Activated CD4-positive, alpha-beta T cell treated with anti-CD3 and anti-CD28 coated beads for 36 hours (primary cell): ENCODE measurements at regions of chr1 and their contacts with region 1.

Region 1: DNA sequence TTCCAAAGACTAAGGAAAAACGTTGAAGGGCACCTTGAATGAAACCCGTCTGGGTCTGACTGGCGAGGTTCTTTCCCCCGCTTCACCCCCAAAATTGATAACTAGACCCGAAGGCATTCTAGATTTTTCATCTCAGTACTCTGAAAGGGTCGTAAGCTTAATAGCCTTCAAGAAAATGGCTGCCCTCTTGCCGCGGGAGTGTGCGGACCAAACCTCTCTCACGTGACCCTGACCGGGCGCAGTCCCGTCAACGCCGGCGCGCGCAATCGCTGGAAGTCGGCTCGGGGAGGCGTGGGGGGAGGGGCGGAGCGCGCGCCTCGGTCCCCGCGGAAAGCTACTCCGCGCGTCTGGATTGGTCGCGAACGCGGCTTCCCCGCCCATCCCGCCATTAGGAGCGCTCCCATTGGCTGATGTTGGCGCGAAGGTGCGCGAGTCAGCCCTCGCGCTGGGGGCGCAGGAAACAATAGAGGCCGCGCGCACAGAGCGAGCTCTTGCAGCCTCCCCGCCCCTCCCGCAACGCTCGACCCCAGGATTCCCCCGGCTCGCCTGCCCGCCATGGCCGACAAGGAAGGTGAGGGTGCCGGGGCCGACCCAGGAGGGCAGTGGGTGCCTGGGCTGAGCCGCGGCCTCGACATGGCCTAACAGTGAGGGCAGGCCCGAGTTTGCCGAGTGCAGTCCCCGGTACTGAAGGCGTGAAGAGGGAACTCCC is at the start of gene RBBP4:
- DNase-seq: peak; percentile 99
- ATAC-seq: peak; percentile 89
- H3K4me3 Mint-ChIP-seq: peak within 1 kb of the TSS; percentile 90
- H3K27ac Mint-ChIP-seq: peak within 1 kb of the TSS; percentile 99
- H3K4me1 Mint-ChIP-seq: peaks cover 48% of the 10 kb centered on the region
- H3K27me3 Mint-ChIP-seq: no peaks in the 10 kb centered on the region
- total RNA-seq, gene RBBP4: 323 to 331 TPM

Region 2: DNA sequence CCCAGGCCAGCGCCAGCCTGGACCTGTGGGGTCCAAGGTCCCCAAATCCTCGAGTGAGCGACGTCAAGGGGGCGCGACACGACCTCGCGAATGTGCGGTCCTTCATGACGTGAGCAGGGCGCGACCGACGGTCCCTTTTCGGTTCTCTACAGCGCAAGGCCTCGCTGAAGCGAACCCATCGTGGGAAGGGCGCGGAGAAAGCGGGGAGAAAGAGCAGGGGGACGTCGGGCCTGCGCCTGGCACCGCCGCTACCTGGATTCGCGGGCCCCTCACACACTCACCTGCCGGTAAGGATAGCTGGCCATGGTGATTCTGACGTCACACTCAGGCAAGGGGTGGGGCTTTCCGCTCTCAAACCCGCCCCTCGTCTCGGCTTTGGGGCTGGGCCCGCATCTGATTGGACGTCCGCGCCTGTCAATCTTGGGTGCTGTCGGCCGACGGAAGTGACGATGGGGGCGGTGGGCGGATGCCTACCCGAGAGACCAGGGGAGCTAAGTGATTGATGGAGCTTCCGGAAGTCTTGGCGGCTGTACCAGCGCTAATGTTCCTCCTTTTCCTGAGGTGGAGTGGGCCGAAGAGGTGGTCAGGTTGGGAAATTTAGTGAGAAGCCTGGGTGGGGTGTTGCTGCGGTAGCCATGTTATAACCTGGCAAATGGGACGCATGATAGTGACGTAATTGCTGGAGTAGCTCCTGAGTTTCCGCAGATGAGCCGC is 1006.2 kb before region 1 on chr1 and contains the start of gene PEF1:
- CTCF ChIA-PET with region 1: no interaction called
- POLR2A ChIA-PET with region 1: no interaction called
- intact Hi-C with region 1: loop called in 1 of 2 experiments (anchors 1 kb)
- DNase-seq: peak; percentile 100
- ATAC-seq: peak; percentile 91
- H3K4me3 Mint-ChIP-seq: peak within 1 kb of the TSS; percentile 95
- H3K27ac Mint-ChIP-seq: peak within 1 kb of the TSS; percentile 100
- H3K4me1 Mint-ChIP-seq: peaks cover 23% of the 10 kb centered on the region
- H3K27me3 Mint-ChIP-seq: no peaks in the 10 kb centered on the region
- total RNA-seq, gene PEF1: 48.8 to 59.3 TPM

Region 3: GRCh38 chr1:32221980-32222755 is 428.7 kb before region 1 on chr1 and contains the starts of genes EIF3I and TMEM234:
- CTCF ChIA-PET with region 1: no interaction called
- POLR2A ChIA-PET with region 1: no interaction called
- intact Hi-C with region 1: loop called in 1 of 2 experiments (anchors 1 kb)
- DNase-seq: peak; percentile 95
- ATAC-seq: peak; percentile 95
- H3K4me3 Mint-ChIP-seq: peak within 1 kb of the TSS; percentile 96
- H3K27ac Mint-ChIP-seq: peak within 1 kb of the TSS; percentile 97
- H3K4me1 Mint-ChIP-seq: peaks cover 29% of the 10 kb centered on the region
- H3K27me3 Mint-ChIP-seq: no peaks in the 10 kb centered on the region
- total RNA-seq, gene EIF3I: 299 to 349 TPM
- total RNA-seq, gene TMEM234: 7.3 to 8.2 TPM

Region 4: DNA sequence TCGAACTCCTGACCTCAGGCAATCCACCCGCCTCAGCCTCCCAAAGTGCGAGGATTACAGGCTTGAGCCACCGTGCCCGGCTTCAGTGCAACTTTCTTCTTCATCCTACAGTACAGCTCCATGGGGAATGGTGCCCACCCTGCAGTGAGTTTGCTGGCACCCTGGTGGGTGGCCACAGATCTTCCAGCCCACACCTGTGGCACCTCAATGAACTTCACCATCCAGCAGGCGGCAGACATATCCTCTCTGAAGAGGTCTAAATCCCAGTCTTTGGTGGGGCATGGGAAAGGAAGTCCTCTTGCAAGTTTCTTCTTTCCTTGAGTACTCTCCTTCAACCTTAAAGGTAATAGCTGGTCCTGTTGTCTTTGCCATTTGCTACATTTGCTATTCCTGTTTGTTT is 129.7 kb before region 1 on chr1:
- CTCF ChIA-PET with region 1: interaction called, 15 read pairs
- POLR2A ChIA-PET with region 1: interaction called, 4 read pairs
- intact Hi-C with region 1: loop called (anchors 1 kb)
- DNase-seq: peak; percentile 7
- ATAC-seq: no peak
- H3K4me3 Mint-ChIP-seq: peak overlapping the region; percentile 64
- H3K27ac Mint-ChIP-seq: no peak overlapping the region
- H3K4me1 Mint-ChIP-seq: peaks cover 6% of the 10 kb centered on the region
- H3K27me3 Mint-ChIP-seq: peaks cover 6% of the 10 kb centered on the region

Region 5: DNA sequence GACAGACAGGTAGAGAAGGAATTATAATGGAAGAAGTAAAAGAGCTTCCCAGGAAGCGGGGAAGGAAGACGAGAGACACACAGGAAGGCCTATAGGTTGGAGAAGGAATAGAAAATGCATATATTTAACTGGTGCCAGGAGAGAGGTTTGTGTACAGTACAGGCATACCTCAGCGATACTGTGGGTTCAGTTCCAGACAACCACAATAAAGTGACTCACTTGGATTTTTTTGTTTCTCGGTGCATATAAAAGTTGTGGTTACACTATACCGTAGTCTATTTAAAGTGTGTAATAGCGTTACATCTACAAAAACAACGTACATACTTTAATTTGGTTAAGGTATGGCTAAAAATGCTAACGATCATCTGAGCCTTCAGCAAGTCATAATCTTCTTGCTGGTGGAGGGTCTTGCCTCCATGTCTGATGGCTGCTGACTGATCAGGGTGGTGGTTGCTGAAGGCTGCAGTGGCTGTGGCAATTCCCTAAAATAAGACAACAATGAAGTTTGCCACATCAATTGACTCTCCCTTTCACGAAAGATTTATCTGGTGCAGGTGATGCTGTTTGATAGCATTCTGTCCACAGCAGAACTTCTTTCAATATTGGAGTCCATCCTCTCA is 150.3 kb after region 1 on chr1:
- CTCF ChIA-PET with region 1: no interaction called
- POLR2A ChIA-PET with region 1: interaction called, 7 read pairs
- intact Hi-C with region 1: loop called (anchors 1 kb)
- DNase-seq: peak; percentile 59
- ATAC-seq: peak; percentile 63
- H3K4me3 Mint-ChIP-seq: peak overlapping the region; percentile 49
- H3K27ac Mint-ChIP-seq: peak overlapping the region; percentile 69
- H3K4me1 Mint-ChIP-seq: peaks cover 56% of the 10 kb centered on the region
- H3K27me3 Mint-ChIP-seq: no peaks in the 10 kb centered on the region

Region 6: DNA sequence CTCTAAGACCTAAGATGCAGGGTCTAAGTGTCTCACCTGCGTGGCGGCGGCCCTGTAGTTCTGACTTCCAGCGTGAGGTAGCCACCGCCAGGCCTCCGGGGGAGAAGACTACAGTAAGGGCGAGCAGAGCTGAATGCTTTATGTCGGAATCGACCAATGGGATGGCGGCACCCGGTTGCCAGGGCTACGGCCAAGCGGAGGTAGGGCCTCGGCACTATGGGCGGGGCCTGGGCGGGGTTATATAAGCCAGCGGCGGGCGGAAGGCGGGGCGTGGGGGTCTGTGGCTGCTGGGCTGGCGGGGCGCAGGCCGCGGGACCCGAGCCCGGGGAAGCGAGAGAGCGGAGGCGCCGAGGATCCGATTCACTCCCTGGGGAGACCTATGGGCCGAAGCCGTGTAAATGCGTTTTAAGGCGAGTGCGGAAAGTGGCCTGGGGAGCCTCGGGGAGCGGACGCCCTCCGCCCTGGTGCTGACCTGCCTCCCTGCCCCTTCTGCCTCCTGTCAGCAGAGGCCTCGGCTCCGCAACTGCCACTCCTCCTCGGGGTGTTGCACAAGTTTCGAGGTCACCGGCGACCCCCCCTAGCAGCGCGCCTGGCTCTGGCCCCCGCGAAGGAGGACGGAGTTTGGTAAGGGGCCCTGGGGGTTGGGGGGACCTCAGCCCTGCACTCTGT is 430.1 kb after region 1 on chr1 and contains the start of gene AZIN2:
- CTCF ChIA-PET with region 1: no interaction called
- POLR2A ChIA-PET with region 1: no interaction called
- intact Hi-C with region 1: loop called in 1 of 2 experiments (anchors 1 kb)
- DNase-seq: peak; percentile 98
- ATAC-seq: peak; percentile 100
- H3K4me3 Mint-ChIP-seq: peak within 1 kb of the TSS; percentile 61
- H3K27ac Mint-ChIP-seq: peak within 1 kb of the TSS; percentile 43
- H3K4me1 Mint-ChIP-seq: peaks cover 17% of the 10 kb centered on the region
- H3K27me3 Mint-ChIP-seq: peaks cover 3% of the 10 kb centered on the region
- total RNA-seq, gene AZIN2: 0.98 to 2.1 TPM